K562 (cell line): ENCODE measurements at regions of chr20 and their contacts with region 1.

Region 1: DNA sequence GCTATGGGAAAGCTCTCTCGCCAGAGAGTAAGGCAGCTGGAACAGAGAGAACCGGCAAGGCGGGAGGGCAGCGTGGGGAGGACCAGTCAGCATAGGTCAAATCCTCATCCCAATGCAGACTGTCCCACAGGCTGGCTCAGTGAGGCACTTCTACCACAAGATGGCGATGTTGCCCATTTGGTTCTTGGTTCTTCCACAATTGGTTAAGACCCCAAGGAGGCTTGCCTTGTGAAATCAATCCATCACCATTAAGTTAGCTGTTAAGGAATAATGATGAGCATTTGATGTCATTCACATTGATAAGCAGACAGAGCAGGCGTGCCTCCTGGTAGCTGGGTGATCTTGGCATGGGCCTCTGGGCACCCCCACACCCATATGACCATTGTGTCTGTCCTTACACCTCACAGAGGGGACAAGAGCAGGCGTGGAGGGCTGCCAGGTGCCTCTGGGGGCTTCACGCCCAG is 2.4 kb downstream of the CSTL1 start:
- DNase-seq: peak; percentile 69 to 77 (median 70)
- ATAC-seq: peak; percentile 90
- H3K4me3 ChIP-seq: no peak overlapping the region
- H3K27ac ChIP-seq: no peak overlapping the region
- H3K4me1 ChIP-seq: 0 out of 5 replicates have a peak, but pooled peaks cover 0 to under 1% of the 10 kb centered on the region in 2 experiments
- H3K27me3 ChIP-seq: peaks cover 0 to 7% of the 10 kb centered on the region in 2 experiments; a peak in 1 of 5 replicates
- CTCF ChIP-seq: peak; percentile 70 to 79 (median 77)
- EP300 ChIP-seq: no peak
- POLR2A ChIP-seq: no peak
- RAD21 ChIP-seq: peak; percentile 57 to 75

Region 2: GRCh38 chr20:23350196-23350903 is 91.5 kb before region 1 on chr20 and contains the start of gene NXT1:
- CTCF ChIA-PET with region 1: no interaction called
- POLR2A ChIA-PET with region 1: no interaction called
- in situ Hi-C with region 1: no loop called
- intact Hi-C with region 1: loop called (anchors 1 kb)
- DNase-seq: peak; percentile 79 to 95 (median 86)
- ATAC-seq: peak; percentile 97
- H3K4me3 ChIP-seq: peak within 1 kb of the TSS; percentile 95
- H3K27ac ChIP-seq: peak within 1 kb of the TSS; percentile 95
- H3K4me1 ChIP-seq: peaks cover 9 to 12% of the 10 kb centered on the region in 2 experiments; a peak in 4 of 5 replicates
- H3K27me3 ChIP-seq: no peaks in the 10 kb centered on the region
- CTCF ChIP-seq: peak in 2 of 3 experiments; percentile 5; a peak in 2 of 6 replicates
- EP300 ChIP-seq: no peak
- POLR2A ChIP-seq: peak; percentile 82
- RAD21 ChIP-seq: no peak
- polyA plus RNA-seq, gene NXT1: 7.7 to 8.9 TPM

Region 3: GRCh38 chr20:23451956-23452487 is 10.1 kb after region 1 on chr20:
- CTCF ChIA-PET with region 1: no interaction called
- POLR2A ChIA-PET with region 1: no interaction called
- in situ Hi-C with region 1: no loop called
- intact Hi-C with region 1: no loop called
- DNase-seq: no peak
- ATAC-seq: no peak
- H3K4me3 ChIP-seq: no peak overlapping the region
- H3K27ac ChIP-seq: no peak overlapping the region
- H3K4me1 ChIP-seq: no peaks in the 10 kb centered on the region
- H3K27me3 ChIP-seq: peaks cover 0 to 49% of the 10 kb centered on the region in 2 experiments; a peak in 4 of 5 replicates
- CTCF ChIP-seq: no peak
- EP300 ChIP-seq: no peak
- POLR2A ChIP-seq: no peak
- RAD21 ChIP-seq: no peak

Region 4: GRCh38 chr20:23606652-23607049 is 164.8 kb after region 1 on chr20:
- CTCF ChIA-PET with region 1: interaction called, 25 read pairs
- POLR2A ChIA-PET with region 1: interaction called, 3 read pairs
- in situ Hi-C with region 1: loop called (anchors 10 kb)
- intact Hi-C with region 1: loop called (anchors 1 kb)
- DNase-seq: peak; percentile 60 to 68 (median 68)
- ATAC-seq: peak; percentile 96
- H3K4me3 ChIP-seq: no peak overlapping the region
- H3K27ac ChIP-seq: no peak overlapping the region
- H3K4me1 ChIP-seq: no peaks in the 10 kb centered on the region; a peak in 1 of 5 replicates
- H3K27me3 ChIP-seq: peaks cover 0 to 8% of the 10 kb centered on the region in 2 experiments; a peak in 2 of 5 replicates
- CTCF ChIP-seq: peak; percentile 79 to 85 (median 81)
- EP300 ChIP-seq: no peak
- POLR2A ChIP-seq: no peak
- RAD21 ChIP-seq: peak; percentile 64 to 79